Activated CD4-positive, alpha-beta T cell treated with anti-CD3 and anti-CD28 coated beads for 36 hours (primary cell): ENCODE measurements at regions of chr9 and their contacts with region 1.

Region 1: GRCh38 chr9:133199648-133200321 is 9.3 kb downstream of the OBP2B start:
- DNase-seq: peak; percentile 81
- ATAC-seq: peak; percentile 96
- H3K4me3 Mint-ChIP-seq: peak overlapping the region; percentile 76
- H3K27ac Mint-ChIP-seq: peak overlapping the region; percentile 75
- H3K4me1 Mint-ChIP-seq: peaks cover 10% of the 10 kb centered on the region
- H3K27me3 Mint-ChIP-seq: peaks cover 12% of the 10 kb centered on the region

Region 2: GRCh38 chr9:132717326-132717945 is 482.3 kb before region 1 on chr9:
- CTCF ChIA-PET with region 1: no interaction called
- POLR2A ChIA-PET with region 1: no interaction called
- intact Hi-C with region 1: loop called in 1 of 2 experiments (anchors 10 kb)
- DNase-seq: no peak
- ATAC-seq: no peak
- H3K4me3 Mint-ChIP-seq: no peak overlapping the region
- H3K27ac Mint-ChIP-seq: no peak overlapping the region
- H3K4me1 Mint-ChIP-seq: no peaks in the 10 kb centered on the region
- H3K27me3 Mint-ChIP-seq: peaks cover 11% of the 10 kb centered on the region

Region 3: GRCh38 chr9:133048569-133048968 is 151.2 kb before region 1 on chr9:
- CTCF ChIA-PET with region 1: no interaction called
- POLR2A ChIA-PET with region 1: no interaction called
- intact Hi-C with region 1: no loop called
- DNase-seq: peak; percentile 61
- ATAC-seq: peak; percentile 88
- H3K4me3 Mint-ChIP-seq: no peak overlapping the region
- H3K27ac Mint-ChIP-seq: no peak overlapping the region
- H3K4me1 Mint-ChIP-seq: peaks cover 4% of the 10 kb centered on the region
- H3K27me3 Mint-ChIP-seq: no peaks in the 10 kb centered on the region